ENCODE measurements at regions of chr1 and their contacts with region 1.

Region 1: DNA sequence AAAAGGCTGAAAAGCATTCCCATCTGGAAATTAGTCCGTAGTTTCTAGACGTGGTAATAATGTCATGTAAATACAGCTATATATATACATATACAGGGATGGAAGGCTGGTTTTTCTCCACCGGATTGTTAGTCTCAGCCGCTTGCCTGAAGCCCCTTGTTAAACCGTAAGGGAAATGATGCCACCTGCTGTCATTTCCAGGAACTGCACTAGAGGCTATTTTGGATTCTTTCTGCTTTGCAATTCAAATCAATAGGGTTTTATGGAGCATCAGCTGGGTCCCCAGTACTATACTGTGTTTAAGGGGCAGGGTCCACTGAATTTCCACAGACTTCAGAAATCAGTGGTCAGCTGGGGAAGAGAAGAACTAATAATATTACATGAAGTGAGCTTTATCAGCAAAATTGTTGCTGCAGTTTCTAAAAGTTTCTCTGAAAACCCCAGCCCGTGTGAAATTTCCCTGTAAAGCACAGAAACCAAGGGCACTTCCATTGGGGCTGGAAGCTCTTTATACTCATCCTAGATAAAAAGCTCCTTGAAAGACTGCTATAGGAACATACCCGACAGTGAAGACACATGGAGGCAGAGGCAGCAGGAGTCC is 33.8 kb upstream of the MPZL1 start:
- DNase-seq: peak; percentile 47 to 81 (median 71)
- ATAC-seq: peak; percentile 84
- H3K4me3 ChIP-seq: no peak overlapping the region
- H3K4me3 Mint-ChIP-seq: no peak overlapping the region
- H3K27ac ChIP-seq: no peak overlapping the region
- H3K27ac Mint-ChIP-seq: peak overlapping the region in 7 of 9 donors; percentile 19 to 82 (median 60)
- H3K4me1 ChIP-seq: no peaks in the 10 kb centered on the region
- H3K4me1 Mint-ChIP-seq: peaks cover 10 to 29% (median 25%) of the 10 kb centered on the region in 7 donors
- H3K27me3 ChIP-seq: no peaks in the 10 kb centered on the region
- H3K27me3 Mint-ChIP-seq: no peaks in the 10 kb centered on the region

Region 2: DNA sequence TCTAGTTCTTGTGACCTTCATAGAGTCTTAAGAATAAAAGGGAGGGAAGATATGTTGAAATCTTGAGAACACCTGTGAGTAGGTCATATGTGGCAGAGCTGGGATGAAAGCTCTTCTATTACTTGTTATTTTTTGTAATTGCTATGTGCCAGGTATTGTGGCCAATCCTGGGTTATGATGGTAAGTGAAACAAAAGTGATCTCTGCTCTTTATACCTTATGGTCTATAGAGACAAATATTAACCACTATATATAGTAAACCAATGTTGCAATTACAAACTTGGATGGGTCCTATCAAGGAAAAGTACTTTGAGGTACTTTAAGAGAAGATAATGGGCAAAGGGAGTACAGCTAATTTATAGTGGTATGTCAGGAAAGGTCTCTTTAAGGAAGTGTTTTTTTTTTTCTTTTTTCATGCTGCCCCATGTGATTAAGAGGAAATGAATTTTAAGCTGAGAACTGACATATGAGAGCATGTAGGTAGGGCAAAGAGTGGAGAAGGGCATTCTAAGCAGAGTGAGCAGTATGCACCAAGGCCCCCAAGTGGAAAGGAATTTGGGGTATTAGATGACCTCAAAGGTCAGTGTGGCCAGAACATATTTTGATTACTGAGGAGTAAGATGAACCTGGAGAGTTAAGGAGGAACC is 424.1 kb before region 1 on chr1:
- CTCF ChIA-PET with region 1: interaction called, 3 read pairs
- POLR2A ChIA-PET with region 1: no interaction called
- intact Hi-C with region 1: loop called in 1 of 2 experiments (anchors 10 kb)
- DNase-seq: peak in 6 of 9 donors; percentile 5 to 28 (median 14)
- ATAC-seq: peak; percentile 42
- H3K4me3 ChIP-seq: no peak overlapping the region
- H3K4me3 Mint-ChIP-seq: no peak overlapping the region
- H3K27ac ChIP-seq: no peak overlapping the region
- H3K27ac Mint-ChIP-seq: no peak overlapping the region
- H3K4me1 ChIP-seq: peaks cover 12 to 29% of the 10 kb centered on the region in 2 donors
- H3K4me1 Mint-ChIP-seq: peaks cover 20 to 40% (median 35%) of the 10 kb centered on the region in 7 donors
- H3K27me3 ChIP-seq: no peaks in the 10 kb centered on the region
- H3K27me3 Mint-ChIP-seq: no peaks in the 10 kb centered on the region

Region 3: GRCh38 chr1:167605576-167605975 is 82.4 kb before region 1 on chr1:
- CTCF ChIA-PET with region 1: interaction called, 100 read pairs
- POLR2A ChIA-PET with region 1: interaction called, 26 read pairs
- intact Hi-C with region 1: loop called (anchors 1 kb)
- DNase-seq: no peak
- ATAC-seq: no peak
- H3K4me3 ChIP-seq: no peak overlapping the region
- H3K4me3 Mint-ChIP-seq: peak overlapping the region in 1 of 10 donors; percentile 21
- H3K27ac ChIP-seq: no peak overlapping the region
- H3K27ac Mint-ChIP-seq: peak overlapping the region in 2 of 9 donors; percentile 42 to 56
- H3K4me1 ChIP-seq: peaks cover 23 to 28% of the 10 kb centered on the region in 2 donors
- H3K4me1 Mint-ChIP-seq: peaks cover 20 to 43% (median 35%) of the 10 kb centered on the region in 7 donors
- H3K27me3 ChIP-seq: no peaks in the 10 kb centered on the region
- H3K27me3 Mint-ChIP-seq: peaks cover 0 to 4% (median 0%) of the 10 kb centered on the region in 5 donors

Region 4: GRCh38 chr1:167627865-167628641 is 60.0 kb before region 1 on chr1:
- CTCF ChIA-PET with region 1: interaction called, 11 read pairs
- POLR2A ChIA-PET with region 1: interaction called, 6 read pairs
- intact Hi-C with region 1: loop called in 1 of 2 experiments (anchors 1 kb)
- DNase-seq: peak; percentile 33 to 84 (median 73)
- ATAC-seq: peak; percentile 84
- H3K4me3 ChIP-seq: peak overlapping the region; percentile 48
- H3K4me3 Mint-ChIP-seq: peak overlapping the region; percentile 82 to 99 (median 92)
- H3K27ac ChIP-seq: peak overlapping the region; percentile 94
- H3K27ac Mint-ChIP-seq: peak overlapping the region; percentile 85 to 98 (median 95)
- H3K4me1 ChIP-seq: peaks cover 44 to 46% of the 10 kb centered on the region in 2 donors
- H3K4me1 Mint-ChIP-seq: peaks cover 48 to 69% (median 63%) of the 10 kb centered on the region in 7 donors
- H3K27me3 ChIP-seq: no peaks in the 10 kb centered on the region
- H3K27me3 Mint-ChIP-seq: no peaks in the 10 kb centered on the region

Region 5: GRCh38 chr1:167641786-167642500 is 46.1 kb before region 1 on chr1:
- CTCF ChIA-PET with region 1: interaction called, 33 read pairs
- POLR2A ChIA-PET with region 1: interaction called, 10 read pairs
- intact Hi-C with region 1: loop called (anchors 1 kb)
- DNase-seq: peak in 2 of 9 donors; percentile 23 to 26
- ATAC-seq: peak; percentile 50
- H3K4me3 ChIP-seq: peak overlapping the region; percentile 9
- H3K4me3 Mint-ChIP-seq: peak overlapping the region; percentile 16 to 72 (median 56)
- H3K27ac ChIP-seq: peak overlapping the region; percentile 0
- H3K27ac Mint-ChIP-seq: peak overlapping the region; percentile 37 to 83 (median 76)
- H3K4me1 ChIP-seq: peaks cover 68 to 75% of the 10 kb centered on the region in 2 donors
- H3K4me1 Mint-ChIP-seq: peaks cover 79 to 99% (median 93%) of the 10 kb centered on the region in 7 donors
- H3K27me3 ChIP-seq: no peaks in the 10 kb centered on the region
- H3K27me3 Mint-ChIP-seq: no peaks in the 10 kb centered on the region

Region 6: GRCh38 chr1:167734227-167734626 is 46.2 kb after region 1 on chr1:
- CTCF ChIA-PET with region 1: no interaction called
- POLR2A ChIA-PET with region 1: no interaction called
- intact Hi-C with region 1: no loop called
- DNase-seq: no peak
- ATAC-seq: no peak
- H3K4me3 ChIP-seq: no peak overlapping the region
- H3K4me3 Mint-ChIP-seq: no peak overlapping the region
- H3K27ac ChIP-seq: no peak overlapping the region
- H3K27ac Mint-ChIP-seq: no peak overlapping the region
- H3K4me1 ChIP-seq: no peaks in the 10 kb centered on the region
- H3K4me1 Mint-ChIP-seq: peaks cover 0 to 5% (median 0%) of the 10 kb centered on the region in 7 donors
- H3K27me3 ChIP-seq: no peaks in the 10 kb centered on the region
- H3K27me3 Mint-ChIP-seq: no peaks in the 10 kb centered on the region

Region 7: GRCh38 chr1:167746988-167747655 is 59.1 kb after region 1 on chr1:
- CTCF ChIA-PET with region 1: no interaction called
- POLR2A ChIA-PET with region 1: no interaction called
- intact Hi-C with region 1: no loop called
- DNase-seq: no peak
- ATAC-seq: no peak
- H3K4me3 ChIP-seq: no peak overlapping the region
- H3K4me3 Mint-ChIP-seq: no peak overlapping the region
- H3K27ac ChIP-seq: no peak overlapping the region
- H3K27ac Mint-ChIP-seq: no peak overlapping the region
- H3K4me1 ChIP-seq: no peaks in the 10 kb centered on the region
- H3K4me1 Mint-ChIP-seq: peaks cover 4 to 21% (median 9%) of the 10 kb centered on the region in 7 donors
- H3K27me3 ChIP-seq: no peaks in the 10 kb centered on the region
- H3K27me3 Mint-ChIP-seq: no peaks in the 10 kb centered on the region